CD4-positive, alpha-beta T cell (primary cell): ENCODE measurements at regions of chr15 and their contacts with region 1.

Region 1: DNA sequence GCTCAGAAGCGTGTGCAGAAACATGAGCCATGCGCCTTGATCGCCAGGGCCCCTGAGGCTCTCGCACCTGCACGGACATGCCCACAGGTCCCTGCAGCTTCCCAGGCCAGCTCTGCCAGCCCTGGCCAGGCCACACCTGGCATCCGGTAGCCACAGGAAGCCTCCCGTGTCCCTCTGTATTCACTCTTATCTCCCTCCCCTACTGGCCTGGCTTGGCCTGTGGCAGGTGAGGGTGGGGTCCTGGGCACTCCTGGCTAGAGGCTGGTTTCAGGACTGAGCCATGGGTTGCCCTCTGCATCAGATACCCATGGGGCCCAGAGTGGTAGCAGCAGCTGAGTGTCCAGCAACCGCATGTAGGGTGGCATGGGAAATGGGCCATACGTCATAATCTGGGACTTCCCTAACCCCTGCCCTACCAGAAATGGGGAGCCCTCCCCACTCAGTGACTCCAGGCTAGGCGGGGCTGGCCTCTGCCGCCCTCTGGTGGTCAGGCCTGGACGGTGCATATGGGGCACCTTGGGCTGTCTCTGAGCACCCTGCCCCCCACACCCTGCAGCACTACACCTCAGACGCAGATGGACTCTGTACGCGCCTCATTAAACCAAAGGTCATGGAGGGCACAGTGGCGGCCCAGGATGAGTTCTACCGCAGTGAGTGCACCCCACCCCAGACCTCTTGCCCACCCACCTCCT is 12.6 kb upstream of the LMAN1L start:
- DNase-seq: peak; percentile 78 to 94 (median 87)
- ATAC-seq: peak; percentile 94
- H3K4me3 ChIP-seq: no peak overlapping the region
- H3K4me3 Mint-ChIP-seq: peak overlapping the region; percentile 34
- H3K27ac ChIP-seq: peak overlapping the region; percentile 85 to 90
- H3K27ac Mint-ChIP-seq: peak overlapping the region; percentile 93
- H3K4me1 ChIP-seq: peaks cover 60% of the 10 kb centered on the region
- H3K4me1 Mint-ChIP-seq: peaks cover 50% of the 10 kb centered on the region
- H3K27me3 ChIP-seq: no peaks in the 10 kb centered on the region
- H3K27me3 Mint-ChIP-seq: no peaks in the 10 kb centered on the region
- CTCF ChIP-seq: peak; percentile 94

Region 2: GRCh38 chr15:74433592-74434262 is 366.3 kb before region 1 on chr15 and contains the start of gene SEMA7A:
- CTCF ChIA-PET with region 1: no interaction called
- POLR2A ChIA-PET with region 1: no interaction called
- intact Hi-C with region 1: no loop called
- DNase-seq: peak; percentile 35 to 93 (median 67)
- ATAC-seq: peak; percentile 77
- H3K4me3 ChIP-seq: peak within 1 kb of the TSS; percentile 53
- H3K4me3 Mint-ChIP-seq: peak within 1 kb of the TSS; percentile 85
- H3K27ac ChIP-seq: no peak within 1 kb of the TSS
- H3K27ac Mint-ChIP-seq: peak within 1 kb of the TSS; percentile 39
- H3K4me1 ChIP-seq: peaks cover 23% of the 10 kb centered on the region
- H3K4me1 Mint-ChIP-seq: peaks cover 16% of the 10 kb centered on the region
- H3K27me3 ChIP-seq: no peaks in the 10 kb centered on the region
- H3K27me3 Mint-ChIP-seq: no peaks in the 10 kb centered on the region
- CTCF ChIP-seq: no peak
- total RNA-seq, gene SEMA7A: 2.3 to 2.7 TPM

Region 3: GRCh38 chr15:74635228-74635627 is 164.8 kb before region 1 on chr15:
- CTCF ChIA-PET with region 1: interaction called, 3 read pairs
- POLR2A ChIA-PET with region 1: interaction called, 3 read pairs
- intact Hi-C with region 1: loop called in 1 of 2 experiments (anchors 2 kb)
- DNase-seq: peak; percentile 63 to 87 (median 70)
- ATAC-seq: peak; percentile 97
- H3K4me3 ChIP-seq: no peak overlapping the region
- H3K4me3 Mint-ChIP-seq: no peak overlapping the region
- H3K27ac ChIP-seq: no peak overlapping the region
- H3K27ac Mint-ChIP-seq: no peak overlapping the region
- H3K4me1 ChIP-seq: peaks cover 5% of the 10 kb centered on the region
- H3K4me1 Mint-ChIP-seq: no peaks in the 10 kb centered on the region
- H3K27me3 ChIP-seq: no peaks in the 10 kb centered on the region
- H3K27me3 Mint-ChIP-seq: no peaks in the 10 kb centered on the region
- CTCF ChIP-seq: peak; percentile 85

Region 4: GRCh38 chr15:74781431-74782258 is 18.4 kb before region 1 on chr15 and contains the start of gene CSK:
- CTCF ChIA-PET with region 1: interaction called, 231 read pairs
- POLR2A ChIA-PET with region 1: interaction called, 925 read pairs
- intact Hi-C with region 1: loop called (anchors 1 to 2 kb)
- DNase-seq: peak; percentile 59 to 94 (median 80)
- ATAC-seq: peak; percentile 59
- H3K4me3 ChIP-seq: peak within 1 kb of the TSS; percentile 100
- H3K4me3 Mint-ChIP-seq: peak within 1 kb of the TSS; percentile 90
- H3K27ac ChIP-seq: peak within 1 kb of the TSS; percentile 84 to 93
- H3K27ac Mint-ChIP-seq: peak within 1 kb of the TSS; percentile 94
- H3K4me1 ChIP-seq: peaks cover 88% of the 10 kb centered on the region
- H3K4me1 Mint-ChIP-seq: peaks cover 65% of the 10 kb centered on the region
- H3K27me3 ChIP-seq: no peaks in the 10 kb centered on the region
- H3K27me3 Mint-ChIP-seq: no peaks in the 10 kb centered on the region
- CTCF ChIP-seq: peak; percentile 59
- total RNA-seq, gene CSK: 114 to 118 TPM

Region 5: DNA sequence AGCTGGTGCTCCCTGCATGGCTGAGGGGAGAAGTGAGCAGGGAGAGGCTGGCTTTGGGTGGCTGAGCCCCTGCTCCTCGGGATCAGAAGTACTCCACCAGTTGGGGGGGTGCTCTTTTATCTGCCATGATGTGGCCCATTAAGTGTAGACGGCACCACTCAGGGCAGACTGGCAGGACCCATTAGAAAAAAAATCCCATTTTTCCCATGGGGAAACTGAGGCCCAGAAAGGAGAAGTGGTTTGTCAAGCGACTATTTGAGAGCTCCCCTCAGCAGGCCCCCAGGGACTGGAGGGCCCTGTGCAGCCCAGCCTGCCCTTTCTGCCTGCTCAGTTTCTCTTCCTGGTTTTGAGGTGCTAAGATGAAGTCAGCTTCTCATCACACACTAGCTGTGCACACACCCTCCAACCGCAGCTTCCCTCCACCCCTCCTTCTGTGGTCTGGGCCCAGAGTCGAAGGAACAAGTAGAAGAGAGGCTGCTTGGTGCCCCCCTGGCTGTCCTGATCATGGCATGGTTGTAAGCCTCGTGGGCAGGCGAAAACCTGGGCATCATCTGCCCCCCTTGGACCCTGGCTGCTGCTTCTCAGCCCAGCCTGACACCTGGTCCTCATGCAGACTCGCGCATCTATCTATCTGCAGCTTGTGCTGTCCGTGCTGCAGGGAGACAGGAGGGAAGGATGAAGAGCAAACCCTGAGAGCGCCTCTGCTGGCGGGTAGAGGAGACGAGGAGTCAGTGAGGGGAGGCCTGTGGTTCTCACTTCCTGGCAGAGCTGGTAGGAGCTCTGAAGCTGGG is 12.6 kb before region 1 on chr15:
- CTCF ChIA-PET with region 1: interaction called, 231 read pairs
- POLR2A ChIA-PET with region 1: interaction called, 925 read pairs
- intact Hi-C with region 1: loop called in 1 of 2 experiments (anchors 1 kb)
- DNase-seq: peak; percentile 78 to 98 (median 84)
- ATAC-seq: peak; percentile 72
- H3K4me3 ChIP-seq: peak overlapping the region; percentile 100
- H3K4me3 Mint-ChIP-seq: peak overlapping the region; percentile 90
- H3K27ac ChIP-seq: peak overlapping the region; percentile 69 to 93
- H3K27ac Mint-ChIP-seq: peak overlapping the region; percentile 94
- H3K4me1 ChIP-seq: peaks cover 91% of the 10 kb centered on the region
- H3K4me1 Mint-ChIP-seq: peaks cover 71% of the 10 kb centered on the region
- H3K27me3 ChIP-seq: no peaks in the 10 kb centered on the region
- H3K27me3 Mint-ChIP-seq: no peaks in the 10 kb centered on the region
- CTCF ChIP-seq: peak; percentile 83

Region 6: DNA sequence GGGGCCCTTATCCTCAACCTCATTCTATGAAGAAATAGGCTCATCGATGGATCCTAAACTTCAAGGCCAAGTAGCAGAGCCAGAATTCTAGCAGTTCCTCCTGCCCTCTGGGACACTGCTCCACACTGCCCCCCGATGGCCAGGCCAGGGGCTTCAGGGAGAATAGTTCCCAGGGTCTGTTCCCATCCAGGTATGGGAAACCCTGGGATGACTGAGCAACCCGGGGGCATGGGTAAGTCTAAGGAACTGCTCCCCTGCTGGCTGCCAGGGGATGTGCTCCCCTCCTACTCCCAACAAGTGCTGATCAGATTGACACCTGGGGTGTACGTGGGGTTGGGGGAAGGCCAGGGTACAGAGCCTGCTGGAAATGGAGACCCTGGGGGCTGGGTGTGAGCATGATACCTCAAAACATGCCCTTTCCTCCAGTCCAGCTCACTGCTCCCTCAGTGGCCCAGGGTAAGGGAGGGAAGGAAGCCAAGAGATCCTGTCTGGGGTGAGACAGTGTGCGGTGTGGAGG is 35.4 kb after region 1 on chr15:
- CTCF ChIA-PET with region 1: no interaction called
- POLR2A ChIA-PET with region 1: no interaction called
- intact Hi-C with region 1: loop called in 1 of 2 experiments (anchors 5 kb)
- DNase-seq: peak in 13 of 14 experiments; percentile 19 to 64 (median 40)
- ATAC-seq: peak; percentile 72
- H3K4me3 ChIP-seq: no peak overlapping the region
- H3K4me3 Mint-ChIP-seq: no peak overlapping the region
- H3K27ac ChIP-seq: no peak overlapping the region
- H3K27ac Mint-ChIP-seq: no peak overlapping the region
- H3K4me1 ChIP-seq: peaks cover under 1% of the 10 kb centered on the region
- H3K4me1 Mint-ChIP-seq: no peaks in the 10 kb centered on the region
- H3K27me3 ChIP-seq: no peaks in the 10 kb centered on the region
- H3K27me3 Mint-ChIP-seq: no peaks in the 10 kb centered on the region
- CTCF ChIP-seq: peak; percentile 81

Region 7: GRCh38 chr15:74950078-74951000 is 150.3 kb after region 1 on chr15:
- CTCF ChIA-PET with region 1: interaction called, 5 read pairs
- POLR2A ChIA-PET with region 1: no interaction called
- intact Hi-C with region 1: loop called in 1 of 2 experiments (anchors 5 kb)
- DNase-seq: peak; percentile 58 to 87 (median 76)
- ATAC-seq: peak; percentile 96
- H3K4me3 ChIP-seq: no peak overlapping the region
- H3K4me3 Mint-ChIP-seq: no peak overlapping the region
- H3K27ac ChIP-seq: no peak overlapping the region
- H3K27ac Mint-ChIP-seq: no peak overlapping the region
- H3K4me1 ChIP-seq: peaks cover 4% of the 10 kb centered on the region
- H3K4me1 Mint-ChIP-seq: peaks cover 5% of the 10 kb centered on the region
- H3K27me3 ChIP-seq: peaks cover 0 to 6% of the 10 kb centered on the region in 2 experiments
- H3K27me3 Mint-ChIP-seq: no peaks in the 10 kb centered on the region
- CTCF ChIP-seq: peak; percentile 97